ENCODE measurements at regions of chr14 and their contacts with region 1.

Region 1: GRCh38 chr14:22375321-22375930 is 213.6 kb downstream of the DAD1 start:
- DNase-seq: peak; percentile 53
- ATAC-seq: peak; percentile 49; the same call in 1 of the 2 replicates
- H3K4me3 ChIP-seq: no peak overlapping the region
- H3K27ac ChIP-seq: no peak overlapping the region
- H3K4me1 ChIP-seq: no peaks in the 10 kb centered on the region
- H3K27me3 ChIP-seq: peaks cover 56% of the 10 kb centered on the region
- CTCF ChIP-seq: peak; percentile 63 to 71 (median 65)
- POLR2A ChIP-seq: no peak
- RAD21 ChIP-seq: peak; percentile 65

Region 2: DNA sequence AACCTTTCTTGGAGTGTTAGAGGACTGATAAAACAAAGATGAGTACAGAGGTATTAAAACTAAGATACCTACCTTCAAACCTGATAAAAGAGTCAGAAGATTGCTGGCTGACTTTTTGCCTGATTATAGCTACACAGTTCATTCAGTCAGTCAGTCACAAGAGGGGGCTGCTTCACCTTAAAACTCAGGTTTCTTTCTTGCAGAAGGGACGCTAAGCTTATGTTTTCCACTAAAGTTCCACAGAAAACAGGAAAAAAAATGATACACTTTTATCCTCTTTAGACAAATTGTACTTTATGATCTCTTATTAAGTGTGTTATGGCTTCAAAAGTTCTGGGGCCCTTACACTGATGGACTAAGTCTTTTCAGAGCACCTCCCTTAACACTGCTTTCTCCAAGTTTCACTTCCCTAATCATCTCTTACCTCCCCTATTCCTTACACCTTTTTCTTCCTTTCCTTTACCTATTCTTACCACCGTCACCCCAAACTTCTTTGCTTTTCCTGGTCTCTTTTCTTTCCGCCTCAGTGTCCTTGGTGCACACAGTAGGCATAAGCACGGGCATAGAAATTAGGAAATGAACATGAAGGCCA is 253.1 kb before region 1 on chr14:
- CTCF ChIA-PET with region 1: interaction called, 14 read pairs
- POLR2A ChIA-PET with region 1: no interaction called
- RAD21 ChIA-PET with region 1: no interaction called
- intact Hi-C with region 1: no loop called
- DNase-seq: no peak
- ATAC-seq: no peak
- H3K4me3 ChIP-seq: no peak overlapping the region
- H3K27ac ChIP-seq: no peak overlapping the region
- H3K4me1 ChIP-seq: no peaks in the 10 kb centered on the region
- H3K27me3 ChIP-seq: peaks cover 27% of the 10 kb centered on the region
- CTCF ChIP-seq: peak in 2 of 3 experiments; percentile 19 to 28; a peak in 3 of 6 replicates
- POLR2A ChIP-seq: no peak
- RAD21 ChIP-seq: 0 out of 2 replicates have a peak, but pooled peaks have one; percentile 10

Region 3: DNA sequence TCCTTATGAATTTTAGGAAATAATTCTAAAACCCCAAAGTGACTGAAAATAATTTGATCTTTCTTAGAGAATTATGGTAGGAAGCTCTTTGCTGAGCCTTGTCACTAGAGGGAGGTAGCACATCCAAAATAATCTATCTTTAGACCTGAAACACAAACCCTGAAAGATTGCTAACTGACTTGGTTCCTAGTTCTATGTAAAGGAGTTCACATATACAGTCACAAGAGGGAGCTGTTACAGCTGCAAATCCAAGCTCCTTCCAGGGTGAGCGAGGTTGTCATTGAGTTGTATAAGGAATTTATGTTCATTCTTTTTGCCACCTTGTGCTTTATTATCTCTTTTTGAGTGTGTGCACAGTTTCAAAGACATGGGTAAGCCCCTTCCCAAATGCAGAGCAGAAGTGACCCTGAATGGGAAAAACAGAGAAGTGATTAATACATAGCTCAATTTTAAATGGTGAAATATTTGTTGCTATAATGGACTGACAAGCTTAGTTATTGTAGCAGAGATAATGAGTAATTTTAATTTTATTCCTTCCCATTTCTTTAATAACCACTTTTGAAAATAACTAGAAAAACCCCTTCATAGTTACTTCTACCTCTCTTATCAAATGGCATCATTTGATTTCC is 174.3 kb before region 1 on chr14:
- CTCF ChIA-PET with region 1: interaction called, 14 read pairs
- POLR2A ChIA-PET with region 1: no interaction called
- RAD21 ChIA-PET with region 1: no interaction called
- intact Hi-C with region 1: no loop called
- DNase-seq: peak; percentile 46
- ATAC-seq: peak; percentile 97
- H3K4me3 ChIP-seq: no peak overlapping the region
- H3K27ac ChIP-seq: no peak overlapping the region
- H3K4me1 ChIP-seq: no peaks in the 10 kb centered on the region
- H3K27me3 ChIP-seq: no peaks in the 10 kb centered on the region
- CTCF ChIP-seq: peak; percentile 58 to 79 (median 78); a peak in 5 of 6 replicates
- POLR2A ChIP-seq: no peak
- RAD21 ChIP-seq: peak; percentile 29; the same call in 1 of the 2 replicates

Region 4: DNA sequence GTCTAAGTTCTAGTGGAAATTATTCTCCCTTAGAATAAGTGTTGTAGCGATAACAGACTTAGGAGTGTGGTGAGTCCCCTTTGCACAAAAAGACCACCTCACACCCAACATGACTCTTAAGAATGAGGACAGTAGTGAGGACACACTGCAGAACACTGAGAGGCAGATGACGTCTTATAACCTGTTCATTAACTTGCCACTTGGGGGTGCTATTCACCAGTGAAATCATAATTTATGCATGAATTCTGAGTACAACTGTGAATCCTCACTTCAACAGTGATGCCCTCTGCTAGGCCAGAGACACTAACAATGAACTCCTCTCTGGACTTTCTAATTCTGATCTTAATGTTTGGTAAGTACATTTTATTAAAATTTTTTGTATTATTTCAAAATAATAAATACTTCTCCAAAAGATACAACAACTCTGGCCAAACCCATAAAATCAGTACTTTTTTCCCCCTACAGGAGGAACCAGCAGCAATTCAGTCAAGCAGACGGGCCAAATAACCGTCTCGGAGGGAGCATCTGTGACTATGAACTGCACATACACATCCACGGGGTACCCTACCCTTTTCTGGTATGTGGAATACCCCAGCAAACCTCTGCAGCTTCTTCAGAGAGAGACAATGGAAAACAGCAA is 61.1 kb before region 1 on chr14:
- CTCF ChIA-PET with region 1: interaction called, 113 read pairs
- POLR2A ChIA-PET with region 1: no interaction called
- RAD21 ChIA-PET with region 1: interaction called, 11 to 13 read pairs
- intact Hi-C with region 1: loop called (anchors 1 kb)
- DNase-seq: peak; percentile 60
- ATAC-seq: peak; percentile 95
- H3K4me3 ChIP-seq: no peak overlapping the region
- H3K27ac ChIP-seq: no peak overlapping the region
- H3K4me1 ChIP-seq: no peaks in the 10 kb centered on the region
- H3K27me3 ChIP-seq: peaks cover 52% of the 10 kb centered on the region
- CTCF ChIP-seq: peak; percentile 44 to 82 (median 61); a peak in 5 of 6 replicates
- POLR2A ChIP-seq: no peak
- RAD21 ChIP-seq: peak; percentile 68

Region 5: DNA sequence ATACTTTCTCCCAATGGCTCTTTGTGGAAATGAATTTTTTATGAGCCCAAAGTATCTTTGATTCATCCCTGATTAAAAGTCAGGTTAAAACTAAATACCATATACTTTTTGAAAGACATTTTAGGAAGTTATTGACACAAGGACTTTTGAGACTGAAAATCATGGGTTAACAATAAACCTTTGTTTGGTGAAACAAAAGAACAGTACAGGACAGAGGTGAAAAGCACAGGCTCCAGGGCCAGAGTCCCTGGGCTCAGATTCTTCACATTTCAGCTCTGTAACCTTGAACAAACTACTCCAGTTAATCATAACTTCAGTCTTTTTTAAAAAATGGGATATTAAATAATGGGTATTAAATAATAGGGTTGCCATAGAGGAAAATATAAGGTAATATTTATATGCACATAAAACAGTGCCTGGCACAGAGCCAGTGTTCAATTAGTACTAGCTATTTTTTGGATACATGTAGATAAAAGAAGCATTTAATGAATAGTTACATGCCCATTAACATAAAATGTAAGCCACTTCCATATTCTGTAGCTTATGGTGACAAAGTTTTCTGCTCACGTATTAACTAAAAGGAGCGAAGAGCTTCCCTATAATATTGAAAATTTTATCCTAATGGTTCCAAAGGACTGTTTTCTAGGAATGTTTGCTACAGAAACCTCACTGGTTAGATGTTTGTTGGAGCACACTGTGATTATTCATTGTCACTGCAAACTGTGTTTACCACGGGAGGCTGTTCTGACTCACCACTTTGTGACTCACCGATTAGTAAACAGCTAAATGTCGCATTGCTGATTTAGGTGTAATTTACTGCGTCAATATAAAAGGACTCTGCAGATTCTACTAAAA is 41.8 kb before region 1 on chr14:
- CTCF ChIA-PET with region 1: interaction called, 13 read pairs
- POLR2A ChIA-PET with region 1: no interaction called
- RAD21 ChIA-PET with region 1: no interaction called
- intact Hi-C with region 1: no loop called
- DNase-seq: peak; percentile 79
- ATAC-seq: peak; percentile 89
- H3K4me3 ChIP-seq: peak overlapping the region in 1 of 2 experiments; percentile 42; a peak in 3 of 4 replicates
- H3K27ac ChIP-seq: peak overlapping the region; percentile 50; the same call in 1 of the 2 replicates
- H3K4me1 ChIP-seq: peaks cover 21 to 25% of the 10 kb centered on the region in 2 experiments
- H3K27me3 ChIP-seq: no peaks in the 10 kb centered on the region
- CTCF ChIP-seq: no peak
- POLR2A ChIP-seq: no peak
- RAD21 ChIP-seq: no peak

Region 6: DNA sequence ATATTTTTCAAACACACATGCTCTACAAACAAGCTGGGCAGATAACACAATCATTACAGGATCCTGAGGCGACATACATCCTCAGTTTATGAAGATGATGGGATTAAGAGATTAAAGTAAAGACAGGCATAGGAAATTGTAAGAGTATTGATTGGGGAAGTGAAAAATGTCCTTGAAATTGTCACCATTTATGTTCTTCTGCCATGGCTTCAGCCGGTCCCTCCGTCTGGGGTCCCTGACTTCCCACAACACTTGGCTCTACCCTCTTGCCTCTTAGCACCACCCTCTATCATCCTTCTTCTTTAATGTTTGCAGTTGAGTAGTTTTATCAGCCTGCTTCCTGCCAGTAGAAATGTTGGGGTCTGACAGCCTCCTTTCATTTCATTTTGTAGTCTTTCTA is 30.8 kb before region 1 on chr14:
- CTCF ChIA-PET with region 1: no interaction called
- POLR2A ChIA-PET with region 1: no interaction called
- RAD21 ChIA-PET with region 1: no interaction called
- intact Hi-C with region 1: no loop called
- DNase-seq: no peak
- ATAC-seq: no peak
- H3K4me3 ChIP-seq: no peak overlapping the region
- H3K27ac ChIP-seq: no peak overlapping the region
- H3K4me1 ChIP-seq: no peaks in the 10 kb centered on the region
- H3K27me3 ChIP-seq: no peaks in the 10 kb centered on the region
- CTCF ChIP-seq: no peak
- POLR2A ChIP-seq: no peak
- RAD21 ChIP-seq: no peak

Region 7: GRCh38 chr14:22432348-22432976 is 57.0 kb after region 1 on chr14:
- CTCF ChIA-PET with region 1: no interaction called
- POLR2A ChIA-PET with region 1: no interaction called
- RAD21 ChIA-PET with region 1: no interaction called
- intact Hi-C with region 1: no loop called
- DNase-seq: peak; percentile 13
- ATAC-seq: 0 out of 2 replicates have a peak, but pooled peaks have one; percentile 38
- H3K4me3 ChIP-seq: no peak overlapping the region
- H3K27ac ChIP-seq: no peak overlapping the region
- H3K4me1 ChIP-seq: peaks cover 7 to 12% of the 10 kb centered on the region in 2 experiments; a peak in 2 of 4 replicates
- H3K27me3 ChIP-seq: peaks cover 76% of the 10 kb centered on the region
- CTCF ChIP-seq: no peak
- POLR2A ChIP-seq: no peak
- RAD21 ChIP-seq: no peak

Measured in HCT116 (cell line).